ENCODE measurements at regions of chr14 and their contacts with region 1.

Region 1: GRCh38 chr14:93939304-93940229 is 12.4 kb downstream of the FAM181A start:
- DNase-seq: peak; percentile 93
- ATAC-seq: peak; percentile 95
- H3K4me3 Mint-ChIP-seq: peak overlapping the region; percentile 49
- H3K27ac Mint-ChIP-seq: peak overlapping the region; percentile 34
- H3K4me1 Mint-ChIP-seq: peaks cover 12% of the 10 kb centered on the region
- H3K27me3 Mint-ChIP-seq: peaks cover 20% of the 10 kb centered on the region
- CTCF ChIP-seq: peak; percentile 99

Region 2: GRCh38 chr14:93953263-93953662 is 13.7 kb after region 1 on chr14:
- CTCF ChIA-PET with region 1: interaction called, 170 read pairs
- POLR2A ChIA-PET with region 1: interaction called, 7 read pairs
- intact Hi-C with region 1: no loop called
- DNase-seq: no peak
- ATAC-seq: no peak
- H3K4me3 Mint-ChIP-seq: peak overlapping the region; percentile 83
- H3K27ac Mint-ChIP-seq: no peak overlapping the region
- H3K4me1 Mint-ChIP-seq: peaks cover 70% of the 10 kb centered on the region
- H3K27me3 Mint-ChIP-seq: no peaks in the 10 kb centered on the region
- CTCF ChIP-seq: peak; percentile 14

Region 3: DNA sequence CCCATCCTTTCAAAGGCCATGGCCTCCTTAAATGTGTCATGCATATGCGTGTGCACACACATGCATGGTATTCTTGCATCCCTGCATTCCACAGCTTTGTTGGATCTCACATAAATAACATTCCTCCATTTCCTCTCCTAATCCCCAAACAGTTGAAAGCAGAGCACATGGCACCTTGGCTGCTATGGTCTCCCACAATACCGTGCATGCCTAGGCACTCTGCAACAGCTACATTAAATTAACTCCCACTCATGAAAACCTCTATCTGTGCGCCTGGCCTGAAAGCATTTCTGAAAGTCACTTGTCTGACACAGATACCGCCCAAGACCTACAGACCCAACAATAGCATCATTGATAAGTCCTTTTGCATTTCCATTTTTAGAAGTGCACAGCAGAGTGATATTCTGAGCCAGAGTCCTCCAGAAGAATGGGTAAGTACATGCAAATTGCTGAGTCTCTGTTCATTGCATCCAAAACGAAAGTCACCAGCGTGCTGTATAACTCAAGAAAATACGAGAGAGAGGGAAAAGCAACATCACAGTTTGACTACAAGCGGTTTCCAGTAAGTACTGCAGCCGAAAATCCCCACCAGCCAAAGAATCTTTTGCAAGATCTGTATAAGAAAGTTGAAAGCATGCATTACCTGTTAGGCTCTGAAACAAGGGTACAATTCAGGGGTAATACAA is 36.4 kb after region 1 on chr14:
- CTCF ChIA-PET with region 1: interaction called, 290 read pairs
- POLR2A ChIA-PET with region 1: interaction called, 9 read pairs
- intact Hi-C with region 1: loop called (anchors 5 kb)
- DNase-seq: no peak
- ATAC-seq: peak; percentile 8
- H3K4me3 Mint-ChIP-seq: peak overlapping the region; percentile 45
- H3K27ac Mint-ChIP-seq: peak overlapping the region; percentile 91
- H3K4me1 Mint-ChIP-seq: peaks cover 81% of the 10 kb centered on the region
- H3K27me3 Mint-ChIP-seq: no peaks in the 10 kb centered on the region
- CTCF ChIP-seq: no peak

Region 4: GRCh38 chr14:94009767-94010166 is 70.2 kb after region 1 on chr14:
- CTCF ChIA-PET with region 1: interaction called, 437 read pairs
- POLR2A ChIA-PET with region 1: interaction called, 3 read pairs
- intact Hi-C with region 1: loop called (anchors 2 kb)
- DNase-seq: peak; percentile 29
- ATAC-seq: peak; percentile 22
- H3K4me3 Mint-ChIP-seq: no peak overlapping the region
- H3K27ac Mint-ChIP-seq: no peak overlapping the region
- H3K4me1 Mint-ChIP-seq: peaks cover 34% of the 10 kb centered on the region
- H3K27me3 Mint-ChIP-seq: peaks cover 11% of the 10 kb centered on the region
- CTCF ChIP-seq: no peak

Region 5: GRCh38 chr14:94036313-94037050 is 96.9 kb after region 1 on chr14:
- CTCF ChIA-PET with region 1: interaction called, 65 read pairs
- POLR2A ChIA-PET with region 1: no interaction called
- intact Hi-C with region 1: no loop called
- DNase-seq: peak; percentile 90
- ATAC-seq: peak; percentile 100
- H3K4me3 Mint-ChIP-seq: no peak overlapping the region
- H3K27ac Mint-ChIP-seq: no peak overlapping the region
- H3K4me1 Mint-ChIP-seq: peaks cover 4% of the 10 kb centered on the region
- H3K27me3 Mint-ChIP-seq: no peaks in the 10 kb centered on the region
- CTCF ChIP-seq: peak; percentile 77

Region 6: GRCh38 chr14:94129111-94129757 is 189.7 kb after region 1 on chr14 and contains the start of gene IFI27L2:
- CTCF ChIA-PET with region 1: interaction called, 18 read pairs
- POLR2A ChIA-PET with region 1: no interaction called
- intact Hi-C with region 1: no loop called
- DNase-seq: peak; percentile 84
- ATAC-seq: peak; percentile 99
- H3K4me3 Mint-ChIP-seq: peak within 1 kb of the TSS; percentile 76
- H3K27ac Mint-ChIP-seq: peak within 1 kb of the TSS; percentile 66
- H3K4me1 Mint-ChIP-seq: peaks cover 15% of the 10 kb centered on the region
- H3K27me3 Mint-ChIP-seq: peaks cover 3% of the 10 kb centered on the region
- CTCF ChIP-seq: peak; percentile 44
- total RNA-seq, gene IFI27L2: 43.0 to 44.5 TPM

Region 7: DNA sequence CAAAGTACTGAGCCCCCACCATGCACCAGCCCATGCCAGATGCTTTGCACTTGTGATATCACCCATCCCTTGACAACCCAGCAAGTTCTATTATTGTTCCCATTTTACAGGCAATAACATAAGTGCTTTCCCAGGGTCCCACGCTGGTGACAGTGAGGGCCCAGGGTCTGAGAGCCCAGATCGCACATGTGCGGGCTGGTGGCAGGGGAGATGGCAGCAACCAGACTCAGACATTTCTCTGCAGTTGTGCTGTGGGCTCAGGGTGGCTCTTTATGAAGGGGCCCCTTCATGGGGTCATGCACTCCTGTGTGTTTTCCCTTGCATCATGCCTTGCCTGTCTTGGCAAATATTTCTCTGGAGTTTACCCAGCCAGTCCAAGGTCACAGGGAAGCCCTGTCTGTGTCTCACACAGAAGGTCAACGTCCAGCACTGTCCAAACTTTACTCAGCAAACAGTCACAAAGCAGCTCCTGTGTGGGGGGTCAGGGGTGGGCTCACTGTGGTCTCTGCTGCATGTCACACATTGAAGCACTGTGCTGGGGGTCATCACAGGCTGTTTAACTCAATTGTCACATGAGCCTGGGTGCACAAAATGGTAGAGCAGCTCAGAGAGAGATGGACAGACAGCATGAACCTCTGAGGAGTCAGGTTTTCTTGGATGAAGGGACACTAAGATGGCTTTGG is 654.3 kb after region 1 on chr14:
- CTCF ChIA-PET with region 1: no interaction called
- POLR2A ChIA-PET with region 1: no interaction called
- intact Hi-C with region 1: no loop called
- DNase-seq: no peak
- ATAC-seq: no peak
- H3K4me3 Mint-ChIP-seq: no peak overlapping the region
- H3K27ac Mint-ChIP-seq: no peak overlapping the region
- H3K4me1 Mint-ChIP-seq: no peaks in the 10 kb centered on the region
- H3K27me3 Mint-ChIP-seq: no peaks in the 10 kb centered on the region
- CTCF ChIP-seq: no peak

Measured in activated CD8-positive, alpha-beta T cell treated with anti-CD3 and anti-CD28 coated beads for 36 hours (primary cell).